H1 (cell line): ENCODE measurements at regions of chr10 and their contacts with region 1.

Region 1: GRCh38 chr10:63819753-63820329 is 298.6 kb downstream of the REEP3 start:
- DNase-seq: peak; percentile 17 to 75
- H3K4me3 ChIP-seq: no peak overlapping the region
- H3K27ac ChIP-seq: no peak overlapping the region
- H3K4me1 ChIP-seq: no peaks in the 10 kb centered on the region
- H3K27me3 ChIP-seq: no peaks in the 10 kb centered on the region
- CTCF ChIP-seq: peak in 2 of 3 experiments; percentile 64 to 70; a peak in 3 of 4 replicates
- EP300 ChIP-seq: no peak
- POLR2A ChIP-seq: no peak
- RAD21 ChIP-seq: peak; percentile 63 to 69

Region 2: GRCh38 chr10:63767138-63767801 is 52.6 kb before region 1 on chr10:
- CTCF ChIA-PET with region 1: interaction called, 11 read pairs
- POLR2A ChIA-PET with region 1: no interaction called
- DNase-seq: no peak
- H3K4me3 ChIP-seq: no peak overlapping the region
- H3K27ac ChIP-seq: no peak overlapping the region
- H3K4me1 ChIP-seq: peaks cover 0 to 8% (median 0%) of the 10 kb centered on the region in 4 experiments; a peak in 2 of 7 replicates
- H3K27me3 ChIP-seq: no peaks in the 10 kb centered on the region
- CTCF ChIP-seq: peak in 1 of 3 experiments; percentile 12; a peak in 1 of 4 replicates
- EP300 ChIP-seq: no peak
- POLR2A ChIP-seq: no peak
- RAD21 ChIP-seq: peak in 1 of 2 experiments; percentile 44

Region 3: GRCh38 chr10:63878428-63878827 is 58.6 kb after region 1 on chr10:
- CTCF ChIA-PET with region 1: no interaction called
- POLR2A ChIA-PET with region 1: no interaction called
- DNase-seq: no peak
- H3K4me3 ChIP-seq: no peak overlapping the region
- H3K27ac ChIP-seq: no peak overlapping the region
- H3K4me1 ChIP-seq: peaks cover 0 to 3% (median under 1%) of the 10 kb centered on the region in 4 experiments; a peak in 3 of 7 replicates
- H3K27me3 ChIP-seq: no peaks in the 10 kb centered on the region
- CTCF ChIP-seq: no peak
- EP300 ChIP-seq: no peak
- POLR2A ChIP-seq: no peak
- RAD21 ChIP-seq: no peak